Calu3 (cell line): ENCODE measurements at regions of chr6 and their contacts with region 1.

Region 1: GRCh38 chr6:16332175-16332542 is 93.8 kb downstream of the GMPR start:
- DNase-seq: peak; percentile 72
- H3K4me3 Mint-ChIP-seq: no peak overlapping the region
- H3K27ac Mint-ChIP-seq: no peak overlapping the region
- H3K4me1 Mint-ChIP-seq: no peaks in the 10 kb centered on the region
- H3K27me3 Mint-ChIP-seq: no peaks in the 10 kb centered on the region
- CTCF ChIP-seq: peak; percentile 54

Region 2: DNA sequence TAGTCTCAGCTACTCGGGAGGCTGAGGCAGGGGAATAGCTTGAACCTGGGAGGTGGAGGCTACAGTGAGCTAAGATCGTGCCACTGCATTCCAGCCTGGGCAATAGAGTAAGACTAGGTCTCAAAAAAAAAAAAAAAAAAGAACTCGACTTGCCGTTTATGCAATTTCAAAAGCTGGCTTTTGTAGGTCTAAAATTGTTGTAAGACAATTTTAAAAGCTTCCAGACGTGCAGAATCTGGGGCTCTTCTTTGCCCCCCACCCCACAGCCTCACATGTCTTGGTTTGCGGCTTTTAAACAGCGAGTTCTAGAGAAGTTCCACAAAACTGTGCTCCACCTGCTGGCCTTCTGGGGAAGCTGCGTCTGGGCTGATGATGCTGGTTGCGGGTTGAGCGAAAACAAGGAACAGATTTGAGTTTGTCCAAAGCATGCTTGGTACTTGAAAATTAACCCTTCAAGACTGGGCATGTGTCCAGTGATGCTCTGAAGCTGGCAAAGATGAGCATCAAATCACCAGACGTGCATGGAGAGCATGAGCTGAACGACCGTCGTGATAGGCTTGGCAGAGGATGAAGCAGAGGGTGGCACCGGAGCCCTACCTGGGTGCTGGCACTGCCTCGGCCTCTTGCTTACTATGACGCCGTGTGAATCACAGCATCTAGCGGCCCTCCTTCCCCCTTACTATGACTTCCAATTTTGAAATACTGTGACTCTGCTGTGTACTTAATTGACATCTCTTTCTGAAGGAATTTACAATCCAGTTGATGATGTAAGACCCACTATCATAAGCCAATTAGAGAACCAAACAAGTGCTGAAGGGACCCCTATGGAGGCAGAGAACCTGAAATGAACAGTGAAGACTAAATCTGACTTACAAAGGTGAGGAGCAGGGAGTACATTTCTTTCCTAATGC is 77.6 kb after region 1 on chr6:
- CTCF ChIA-PET with region 1: no interaction called
- intact Hi-C with region 1: loop called (anchors 5 kb)
- DNase-seq: peak; percentile 30
- H3K4me3 Mint-ChIP-seq: no peak overlapping the region
- H3K27ac Mint-ChIP-seq: no peak overlapping the region
- H3K4me1 Mint-ChIP-seq: peaks cover 8% of the 10 kb centered on the region
- H3K27me3 Mint-ChIP-seq: no peaks in the 10 kb centered on the region
- CTCF ChIP-seq: peak; percentile 63

Region 3: GRCh38 chr6:16514249-16514648 is 182.1 kb after region 1 on chr6:
- CTCF ChIA-PET with region 1: no interaction called
- intact Hi-C with region 1: loop called (anchors 10 kb)
- DNase-seq: peak; percentile 6
- H3K4me3 Mint-ChIP-seq: no peak overlapping the region
- H3K27ac Mint-ChIP-seq: no peak overlapping the region
- H3K4me1 Mint-ChIP-seq: peaks cover 30% of the 10 kb centered on the region
- H3K27me3 Mint-ChIP-seq: no peaks in the 10 kb centered on the region
- CTCF ChIP-seq: peak; percentile 47

Region 4: DNA sequence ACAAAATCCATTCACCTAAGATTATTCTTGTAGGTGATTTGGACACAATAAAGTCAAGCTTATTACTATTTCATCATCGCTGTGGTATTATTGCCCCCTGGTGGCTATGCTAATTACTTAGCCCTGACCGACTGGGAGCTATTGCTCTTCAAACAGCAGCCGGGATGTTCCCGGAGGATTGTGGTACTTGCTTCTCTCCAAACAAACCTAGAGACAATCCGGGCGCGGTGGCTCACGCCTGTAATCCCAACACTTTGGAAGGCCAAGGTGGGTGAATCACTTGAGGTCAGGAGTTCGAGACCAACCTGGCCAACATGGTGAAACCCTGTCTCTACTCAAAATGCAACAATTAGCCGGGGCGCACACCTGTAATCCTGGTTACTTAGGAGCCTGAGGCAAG is 754.3 kb after region 1 on chr6:
- CTCF ChIA-PET with region 1: no interaction called
- intact Hi-C with region 1: loop called (anchors 1 kb)
- DNase-seq: peak; percentile 66
- H3K4me3 Mint-ChIP-seq: no peak overlapping the region
- H3K27ac Mint-ChIP-seq: no peak overlapping the region
- H3K4me1 Mint-ChIP-seq: no peaks in the 10 kb centered on the region
- H3K27me3 Mint-ChIP-seq: peaks cover under 1% of the 10 kb centered on the region
- CTCF ChIP-seq: peak; percentile 55